Mammary epithelial cell (primary cell): ENCODE measurements at regions of chr7 and their contacts with region 1.

Region 1: DNA sequence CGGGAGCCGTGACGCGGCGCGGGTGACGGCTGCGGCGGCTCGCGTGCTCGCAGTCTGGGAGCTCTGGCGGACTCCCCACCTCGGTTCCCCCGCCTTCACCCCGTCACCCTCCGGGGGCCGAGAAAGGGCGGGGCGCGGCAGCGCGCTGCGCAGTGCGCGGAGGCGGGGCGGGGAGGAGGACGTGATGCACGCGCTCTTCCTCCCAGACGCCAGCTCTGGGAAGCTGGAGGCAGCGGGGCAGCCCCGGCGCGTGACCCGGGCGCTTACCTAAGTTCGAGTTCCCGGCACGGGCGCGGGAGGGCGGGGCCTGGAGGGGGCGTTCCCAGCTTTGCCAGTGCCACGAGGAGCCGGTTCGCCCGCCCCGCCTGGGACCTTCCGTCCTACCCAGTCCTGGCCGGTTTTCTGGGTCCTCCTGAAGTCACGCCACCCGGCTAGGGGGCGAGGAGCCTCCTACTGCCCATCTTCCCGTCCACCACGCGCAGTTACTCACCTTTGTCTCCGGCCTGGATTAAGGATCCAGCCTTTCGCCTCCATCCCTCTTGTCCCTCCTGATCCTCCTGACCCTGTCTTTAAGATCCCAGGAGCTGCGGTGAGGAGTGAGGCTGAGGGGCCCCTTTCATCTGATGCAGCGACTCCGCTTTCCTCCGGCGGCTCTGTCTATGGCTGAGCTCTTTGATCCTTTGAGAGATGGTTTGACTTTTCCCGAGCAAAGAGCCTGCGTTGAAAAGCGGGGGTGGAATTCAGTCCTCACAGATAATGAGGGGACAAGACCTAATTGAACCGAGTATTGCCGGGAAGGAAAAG is 470 bp upstream of the NAMPT start:
- DNase-seq: peak; percentile 100
- H3K4me3 ChIP-seq: peak overlapping the region; percentile 50 to 93 (median 60)
- H3K27ac ChIP-seq: peak overlapping the region; percentile 98
- H3K4me1 ChIP-seq: peaks cover 17% of the 10 kb centered on the region
- H3K27me3 ChIP-seq: no peaks in the 10 kb centered on the region
- CTCF ChIP-seq: no peak

Region 2: GRCh38 chr7:106239404-106239803 is 45.8 kb before region 1 on chr7:
- CTCF ChIA-PET with region 1: no interaction called
- dilution Hi-C with region 1: no loop called
- in situ Hi-C with region 1: no loop called
- intact Hi-C with region 1: no loop called
- DNase-seq: no peak
- H3K4me3 ChIP-seq: no peak overlapping the region
- H3K27ac ChIP-seq: no peak overlapping the region
- H3K4me1 ChIP-seq: no peaks in the 10 kb centered on the region
- H3K27me3 ChIP-seq: no peaks in the 10 kb centered on the region
- CTCF ChIP-seq: no peak

Region 3: GRCh38 chr7:106305732-106306131 is 20.5 kb after region 1 on chr7:
- CTCF ChIA-PET with region 1: no interaction called
- dilution Hi-C with region 1: no loop called
- in situ Hi-C with region 1: no loop called
- intact Hi-C with region 1: loop called (anchors 2 kb)
- DNase-seq: peak; percentile 64
- H3K4me3 ChIP-seq: no peak overlapping the region
- H3K27ac ChIP-seq: no peak overlapping the region
- H3K4me1 ChIP-seq: peaks cover 9% of the 10 kb centered on the region
- H3K27me3 ChIP-seq: no peaks in the 10 kb centered on the region
- CTCF ChIP-seq: no peak

Region 4: DNA sequence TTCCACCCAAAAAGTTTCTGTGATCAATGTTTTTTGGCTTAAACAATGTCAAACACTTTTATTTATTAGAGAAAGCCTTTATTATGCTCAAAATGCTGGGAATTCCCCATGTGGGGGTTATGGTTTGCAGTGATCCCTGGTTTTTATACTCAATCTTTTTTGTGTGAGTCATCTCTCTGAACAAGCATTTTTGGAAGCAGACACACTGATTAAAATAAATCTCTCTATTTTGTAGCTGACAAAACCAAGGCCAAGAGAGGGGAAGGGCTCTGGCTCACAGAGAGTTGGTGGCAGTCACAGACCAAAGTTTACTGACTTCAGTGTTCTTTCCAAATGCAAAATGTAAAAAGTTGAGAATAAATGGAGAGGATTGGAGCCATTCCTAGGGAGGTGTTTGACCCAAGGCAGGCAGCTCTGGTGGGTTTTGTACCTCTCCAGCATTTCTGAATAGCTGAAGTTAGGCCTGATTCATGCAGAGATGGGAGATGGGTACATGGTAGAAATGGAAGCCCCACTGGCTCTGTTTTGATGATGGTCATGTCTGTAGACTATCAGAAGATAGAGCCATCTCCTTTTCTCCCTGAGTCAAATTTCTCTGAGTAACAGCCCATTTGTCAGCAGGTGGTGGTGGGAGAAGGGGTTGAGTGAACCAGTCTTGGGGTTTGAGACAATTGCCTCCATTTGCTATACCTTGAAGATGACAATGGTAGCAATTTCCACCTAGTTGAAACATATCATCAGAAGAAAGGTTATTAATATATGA is 44.9 kb after region 1 on chr7:
- CTCF ChIA-PET with region 1: no interaction called
- dilution Hi-C with region 1: no loop called
- in situ Hi-C with region 1: no loop called
- intact Hi-C with region 1: no loop called
- DNase-seq: peak; percentile 74
- H3K4me3 ChIP-seq: no peak overlapping the region
- H3K27ac ChIP-seq: no peak overlapping the region
- H3K4me1 ChIP-seq: peaks cover 14% of the 10 kb centered on the region
- H3K27me3 ChIP-seq: no peaks in the 10 kb centered on the region
- CTCF ChIP-seq: no peak

Region 5: DNA sequence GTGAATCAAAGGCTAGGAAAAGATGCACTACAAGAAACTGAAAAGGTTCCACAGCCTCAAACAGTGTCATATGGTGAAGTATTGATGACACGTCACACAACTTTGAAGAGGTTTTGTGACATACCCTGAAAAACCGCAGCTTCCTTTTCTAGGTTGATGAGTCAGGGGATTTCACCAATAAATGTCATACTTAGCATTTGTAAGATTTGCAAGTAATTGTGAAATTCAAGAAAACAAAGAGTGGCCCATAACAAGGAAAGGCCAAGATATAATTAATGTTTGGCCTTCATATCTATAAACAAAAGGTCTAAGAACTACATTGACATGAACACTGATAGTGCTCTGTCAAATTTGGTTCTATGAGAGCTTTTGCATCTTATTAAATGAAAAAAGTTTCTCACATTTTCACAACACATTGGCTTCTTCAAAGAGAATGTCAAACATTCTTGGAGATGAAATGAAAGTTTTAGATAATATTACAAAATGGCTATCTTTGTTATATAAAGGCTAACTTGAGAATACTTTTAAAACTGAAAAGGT is 61.5 kb after region 1 on chr7:
- CTCF ChIA-PET with region 1: no interaction called
- dilution Hi-C with region 1: no loop called
- in situ Hi-C with region 1: loop called in 1 of 2 experiments (anchors 5 kb)
- intact Hi-C with region 1: loop called (anchors 1 kb)
- DNase-seq: peak; percentile 94
- H3K4me3 ChIP-seq: no peak overlapping the region
- H3K27ac ChIP-seq: peak overlapping the region; percentile 66
- H3K4me1 ChIP-seq: peaks cover 20% of the 10 kb centered on the region
- H3K27me3 ChIP-seq: no peaks in the 10 kb centered on the region
- CTCF ChIP-seq: no peak

Region 6: GRCh38 chr7:106367018-106367420 is 81.8 kb after region 1 on chr7:
- CTCF ChIA-PET with region 1: no interaction called
- dilution Hi-C with region 1: no loop called
- in situ Hi-C with region 1: no loop called
- intact Hi-C with region 1: loop called (anchors 2 kb)
- DNase-seq: no peak
- H3K4me3 ChIP-seq: no peak overlapping the region
- H3K27ac ChIP-seq: no peak overlapping the region
- H3K4me1 ChIP-seq: peaks cover 3% of the 10 kb centered on the region
- H3K27me3 ChIP-seq: no peaks in the 10 kb centered on the region
- CTCF ChIP-seq: peak; percentile 17 to 51

Region 7: GRCh38 chr7:106425017-106425719 is 139.9 kb after region 1 on chr7:
- CTCF ChIA-PET with region 1: no interaction called
- dilution Hi-C with region 1: no loop called
- in situ Hi-C with region 1: loop called in 1 of 2 experiments (anchors 10 kb)
- intact Hi-C with region 1: loop called (anchors 1 kb)
- DNase-seq: peak; percentile 99
- H3K4me3 ChIP-seq: peak overlapping the region in 1 of 3 experiments; percentile 23
- H3K27ac ChIP-seq: peak overlapping the region; percentile 99
- H3K4me1 ChIP-seq: peaks cover 45% of the 10 kb centered on the region
- H3K27me3 ChIP-seq: no peaks in the 10 kb centered on the region
- CTCF ChIP-seq: no peak